ENCODE measurements at regions of chr14 and their contacts with region 1.

Region 1: DNA sequence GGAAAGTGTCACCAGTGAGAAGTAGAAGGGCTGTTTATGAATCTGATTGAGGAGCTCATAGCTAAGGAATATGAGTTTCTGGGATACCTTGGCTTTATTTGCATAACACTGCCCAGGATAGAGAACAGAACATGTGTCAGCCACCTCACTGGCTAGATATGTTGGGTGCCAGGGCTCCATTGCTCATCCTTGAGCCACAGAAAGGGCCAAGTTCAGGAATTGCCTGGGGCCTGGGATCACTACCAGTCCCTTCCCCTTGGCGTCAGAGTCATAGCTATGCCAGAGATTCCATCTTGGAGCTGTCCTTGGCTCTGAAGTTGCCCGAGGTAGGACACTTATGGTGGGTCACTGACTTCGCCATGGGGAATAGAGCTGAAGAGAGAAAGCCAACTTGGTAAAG is 49.0 kb downstream of the IFT43 start:
- DNase-seq: no peak

Region 2: GRCh38 chr14:76067536-76067935 is 33.0 kb after region 1 on chr14:
- in situ Hi-C with region 1: no loop called
- DNase-seq: no peak

Region 3: GRCh38 chr14:76352639-76353281 is 318.2 kb after region 1 on chr14:
- in situ Hi-C with region 1: loop called (anchors 25 kb)
- DNase-seq: peak; percentile 50

Measured in SK-MEL-5 (cell line).